AG04449 (cell line): ENCODE measurements at regions of chr16 and their contacts with region 1.

Region 1: GRCh38 chr16:20806168-20807050 is at the starts of genes ERI2 and REXO5:
- DNase-seq: peak; percentile 58
- H3K4me3 ChIP-seq: peak within 1 kb of the TSS; percentile 85
- CTCF ChIP-seq: peak; percentile 70

Region 2: DNA sequence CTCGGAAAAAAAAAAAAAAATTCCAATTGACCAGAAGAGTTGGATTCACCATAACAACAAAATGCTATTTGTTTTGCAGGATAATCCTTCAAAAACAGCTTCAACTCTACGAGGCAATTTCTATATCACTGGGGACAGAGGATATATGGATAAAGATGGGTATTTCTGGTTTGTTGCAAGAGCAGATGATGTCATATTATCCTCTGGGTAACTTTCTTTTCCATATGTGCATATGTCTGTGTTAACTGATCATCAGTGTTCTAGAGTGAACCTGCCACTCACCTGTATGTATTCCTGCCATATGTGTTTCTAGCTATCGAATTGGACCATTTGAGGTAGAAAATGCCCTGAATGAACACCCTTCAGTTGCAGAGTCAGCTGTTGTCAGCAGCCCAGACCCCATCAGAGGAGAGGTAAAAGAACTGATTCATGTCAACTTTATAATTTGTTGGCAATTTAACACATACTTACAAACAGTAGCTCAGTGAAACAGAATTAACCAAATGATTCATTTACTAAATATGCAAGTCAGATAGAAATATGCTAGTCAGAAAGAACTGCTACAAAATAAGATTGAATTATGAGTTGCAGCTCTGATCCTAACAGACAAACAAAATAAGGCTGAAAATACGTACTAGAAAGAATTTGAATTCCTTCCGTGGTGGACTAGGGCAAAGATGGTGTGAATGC is 14.3 kb before region 1 on chr16:
- CTCF ChIA-PET with region 1: interaction called, 21 read pairs
- POLR2A ChIA-PET with region 1: no interaction called
- DNase-seq: no peak
- H3K4me3 ChIP-seq: no peak overlapping the region
- CTCF ChIP-seq: no peak

Region 3: GRCh38 chr16:21126518-21126917 is 320.1 kb after region 1 on chr16:
- CTCF ChIA-PET with region 1: no interaction called
- POLR2A ChIA-PET with region 1: no interaction called
- DNase-seq: no peak
- H3K4me3 ChIP-seq: no peak overlapping the region
- CTCF ChIP-seq: no peak